Ascending aorta (tissue), 2 donors: ENCODE measurements at regions of chr15 and their contacts with region 1.

Region 1: GRCh38 chr15:90233376-90234095 is at the start of gene CIB1:
- DNase-seq: peak; percentile 91 to 98
- H3K4me3 ChIP-seq: peak within 1 kb of the TSS; percentile 91 to 92
- H3K27ac ChIP-seq: peak within 1 kb of the TSS; percentile 95 to 96
- H3K4me1 ChIP-seq: peaks cover 0 to 22% of the 10 kb centered on the region in 2 donors
- H3K27me3 ChIP-seq: no peaks in the 10 kb centered on the region
- CTCF ChIP-seq: peak in 2 of 3 experiments; percentile 32 to 37
- total RNA-seq, gene CIB1: 50.9 TPM

Region 2: GRCh38 chr15:89893696-89894455 is 339.7 kb before region 1 on chr15 and contains the start of gene AP3S2:
- intact Hi-C with region 1: loop called (anchors 1 kb)
- DNase-seq: peak; percentile 64 to 95
- H3K4me3 ChIP-seq: peak within 1 kb of the TSS; percentile 76 to 87
- H3K27ac ChIP-seq: peak within 1 kb of the TSS; percentile 85 to 90
- H3K4me1 ChIP-seq: peaks cover 0 to 6% of the 10 kb centered on the region in 2 donors
- H3K27me3 ChIP-seq: no peaks in the 10 kb centered on the region
- CTCF ChIP-seq: no peak
- total RNA-seq, gene AP3S2: 16.0 TPM

Region 3: DNA sequence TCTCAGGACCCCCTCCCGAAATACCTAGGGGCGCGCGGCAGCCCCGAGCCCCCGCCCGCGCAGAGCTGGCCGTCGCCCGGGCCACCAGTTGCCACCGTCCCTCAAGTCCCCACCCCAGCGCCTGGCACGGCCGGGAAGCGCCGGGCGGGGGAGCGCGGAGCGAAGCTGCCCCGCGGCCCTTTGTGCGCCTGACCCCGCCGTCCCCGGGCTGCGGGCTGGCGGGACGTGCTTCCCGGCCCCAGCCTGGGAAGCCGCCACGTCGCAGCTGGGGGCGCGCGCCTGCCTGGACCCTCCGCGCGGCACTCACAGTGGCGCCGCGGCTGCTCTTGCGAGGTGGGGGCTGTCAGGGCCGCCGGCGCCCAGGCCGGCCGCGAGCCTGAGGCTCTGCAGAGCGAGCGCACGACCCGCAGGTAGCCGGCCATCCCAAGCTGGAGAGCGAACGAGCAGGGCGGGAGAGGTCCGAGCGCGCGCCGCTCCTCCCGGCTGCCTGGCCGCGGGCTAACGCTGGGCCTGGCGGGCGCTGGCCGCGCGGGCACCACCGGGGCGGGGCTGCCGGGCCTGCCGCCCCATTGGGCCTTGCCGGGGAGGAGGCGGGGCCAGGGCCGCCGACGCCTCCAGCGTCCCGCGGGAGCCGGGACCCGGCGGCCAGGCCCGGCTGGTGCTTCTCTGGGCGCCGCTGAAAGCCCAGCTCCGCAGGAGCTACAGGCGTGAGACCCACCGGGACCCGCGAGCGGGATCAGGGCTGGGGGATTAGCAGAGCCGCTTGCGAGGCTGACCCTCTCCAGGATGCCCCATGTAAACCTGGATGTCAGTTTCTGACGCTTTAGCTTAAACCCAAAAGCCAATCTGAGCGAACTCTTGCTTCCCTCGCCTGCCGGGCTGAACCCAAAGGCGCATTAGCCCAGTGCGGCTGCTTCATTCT is 131.3 kb before region 1 on chr15 and contains the start of gene IDH2:
- intact Hi-C with region 1: loop called (anchors 1 kb)
- DNase-seq: peak; percentile 25 to 88
- H3K4me3 ChIP-seq: peak within 1 kb of the TSS; percentile 86 to 91
- H3K27ac ChIP-seq: peak within 1 kb of the TSS; percentile 88 to 92
- H3K4me1 ChIP-seq: peaks cover 14 to 36% of the 10 kb centered on the region in 2 donors
- H3K27me3 ChIP-seq: no peaks in the 10 kb centered on the region
- CTCF ChIP-seq: peak in 1 of 3 experiments; percentile 19
- total RNA-seq, gene IDH2: 49.7 TPM

Region 4: GRCh38 chr15:90249203-90249863 is 15.8 kb after region 1 on chr15 and contains the start of gene TTLL13:
- intact Hi-C with region 1: loop called (anchors 1 kb)
- DNase-seq: peak; percentile 79 to 95
- H3K4me3 ChIP-seq: peak within 1 kb of the TSS; percentile 55 to 63
- H3K27ac ChIP-seq: no peak within 1 kb of the TSS
- H3K4me1 ChIP-seq: peaks cover 0 to 3% of the 10 kb centered on the region in 2 donors
- H3K27me3 ChIP-seq: no peaks in the 10 kb centered on the region
- CTCF ChIP-seq: no peak
- total RNA-seq, gene TTLL13: not detected